A673 (cell line): ENCODE measurements at regions of chr6 and their contacts with region 1.

Region 1: GRCh38 chr6:21694168-21694567 is 100.6 kb downstream of the SOX4 start:
- DNase-seq: no peak
- H3K4me3 ChIP-seq: no peak overlapping the region
- H3K27ac ChIP-seq: no peak overlapping the region
- H3K4me1 ChIP-seq: no peaks in the 10 kb centered on the region
- H3K27me3 ChIP-seq: no peaks in the 10 kb centered on the region
- CTCF ChIP-seq: no peak

Region 2: GRCh38 chr6:21438986-21439352 is 255.2 kb before region 1 on chr6:
- CTCF ChIA-PET with region 1: no interaction called
- POLR2A ChIA-PET with region 1: no interaction called
- intact Hi-C with region 1: no loop called
- DNase-seq: no peak
- H3K4me3 ChIP-seq: no peak overlapping the region
- H3K27ac ChIP-seq: no peak overlapping the region
- H3K4me1 ChIP-seq: no peaks in the 10 kb centered on the region
- H3K27me3 ChIP-seq: no peaks in the 10 kb centered on the region
- CTCF ChIP-seq: no peak

Region 3: DNA sequence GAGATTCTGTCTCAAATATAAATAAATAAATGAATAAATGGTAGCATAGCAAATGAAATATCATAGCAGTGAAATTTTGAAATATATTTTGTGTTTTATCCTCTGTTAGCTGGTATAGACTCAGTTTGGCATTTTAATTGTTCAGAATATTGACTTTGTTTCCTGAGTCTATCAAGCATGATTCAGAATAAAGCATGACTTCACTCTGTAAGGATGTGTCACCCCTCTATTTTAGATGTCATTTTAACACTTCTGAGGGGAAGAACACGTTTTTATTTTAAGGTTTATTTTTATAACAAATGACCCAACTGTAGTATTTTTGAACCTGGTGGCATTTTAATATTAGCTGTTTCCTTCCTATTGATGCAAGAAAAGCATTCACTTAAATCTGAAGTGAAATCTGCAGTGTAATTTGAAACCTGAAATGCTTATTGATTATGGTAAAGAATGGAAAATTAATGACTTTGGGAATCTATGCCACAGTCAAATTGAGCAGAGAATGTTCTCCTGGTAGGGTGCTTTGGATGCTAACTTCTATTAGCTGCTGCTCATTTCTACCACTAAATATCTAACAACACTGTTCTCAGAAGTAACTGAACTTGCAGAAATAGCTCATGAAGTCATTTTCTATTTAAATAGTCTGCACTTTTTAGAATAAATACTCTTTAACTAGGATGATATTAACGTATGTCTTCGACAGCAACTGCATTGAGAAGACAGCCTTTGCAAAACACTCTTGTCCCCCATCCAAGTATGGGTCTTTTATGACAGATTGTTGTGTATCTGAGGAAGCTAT is 13.6 kb after region 1 on chr6:
- CTCF ChIA-PET with region 1: no interaction called
- POLR2A ChIA-PET with region 1: interaction called, 10 read pairs
- intact Hi-C with region 1: no loop called
- DNase-seq: no peak
- H3K4me3 ChIP-seq: no peak overlapping the region
- H3K27ac ChIP-seq: no peak overlapping the region
- H3K4me1 ChIP-seq: no peaks in the 10 kb centered on the region
- H3K27me3 ChIP-seq: no peaks in the 10 kb centered on the region
- CTCF ChIP-seq: no peak

Region 4: DNA sequence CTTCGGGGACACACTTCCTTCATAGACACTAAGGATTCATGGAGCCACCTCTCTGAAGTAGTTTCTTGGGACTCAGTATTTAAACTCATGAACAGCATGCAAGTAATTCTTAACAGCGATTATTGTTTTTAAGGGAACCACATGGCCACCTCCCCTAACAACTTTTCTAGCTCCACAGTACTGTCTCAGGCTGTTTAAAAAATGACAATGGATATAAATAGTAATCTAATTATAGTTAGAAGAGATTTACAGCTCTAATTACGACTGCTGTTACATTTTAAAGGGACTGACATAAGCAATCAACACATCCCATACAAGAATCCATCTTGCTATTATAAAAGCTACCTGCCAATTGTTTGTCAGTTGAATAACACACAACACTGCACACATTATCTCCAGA is 803.1 kb after region 1 on chr6:
- CTCF ChIA-PET with region 1: no interaction called
- POLR2A ChIA-PET with region 1: no interaction called
- intact Hi-C with region 1: no loop called
- DNase-seq: no peak
- H3K4me3 ChIP-seq: no peak overlapping the region
- H3K27ac ChIP-seq: no peak overlapping the region
- H3K4me1 ChIP-seq: no peaks in the 10 kb centered on the region
- H3K27me3 ChIP-seq: no peaks in the 10 kb centered on the region
- CTCF ChIP-seq: no peak